Tibial artery (tissue), 4 donors: ENCODE measurements at regions of chr5 and their contacts with region 1.

Region 1: DNA sequence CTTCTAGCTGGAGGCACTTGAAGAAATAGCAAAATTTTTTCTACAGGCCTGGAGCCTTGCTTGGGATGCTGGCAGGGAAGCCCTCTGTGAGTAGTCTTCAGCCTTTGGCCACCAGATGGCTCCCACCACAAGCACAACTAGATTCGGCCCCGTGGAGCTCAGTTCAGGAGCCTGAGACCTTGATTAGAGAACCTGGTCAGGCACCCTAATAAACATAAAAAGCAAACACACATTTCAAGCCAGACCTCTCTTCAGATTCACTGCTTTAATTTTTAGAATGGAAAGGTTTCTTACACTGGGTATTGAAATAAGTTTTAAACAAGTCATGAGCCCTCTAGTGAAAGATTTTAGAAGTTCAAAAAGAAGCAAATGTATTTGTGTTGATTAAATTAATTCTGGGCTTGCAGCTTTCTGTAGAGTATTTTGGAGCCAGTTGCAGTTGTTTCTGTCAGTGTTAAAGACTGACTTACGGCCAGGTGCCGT is 41.4 kb downstream of the GLRX start:
- DNase-seq: peak; percentile 88 to 89
- H3K4me3 ChIP-seq: no peak overlapping the region
- H3K27ac ChIP-seq: peak overlapping the region; percentile 58 to 66
- H3K4me1 ChIP-seq: peaks cover 0 to 23% (median 5%) of the 10 kb centered on the region in 4 donors
- H3K27me3 ChIP-seq: no peaks in the 10 kb centered on the region
- CTCF ChIP-seq: peak; percentile 83 to 94

Region 2: GRCh38 chr5:95664204-95664786 is 116.8 kb before region 1 on chr5:
- intact Hi-C with region 1: loop called (anchors 10 kb)
- DNase-seq: peak in 1 of 2 donors; percentile 38
- H3K4me3 ChIP-seq: no peak overlapping the region
- H3K27ac ChIP-seq: no peak overlapping the region
- H3K4me1 ChIP-seq: peaks cover 0 to 3% (median under 1%) of the 10 kb centered on the region in 4 donors
- H3K27me3 ChIP-seq: no peaks in the 10 kb centered on the region
- CTCF ChIP-seq: peak; percentile 76 to 80

Region 3: DNA sequence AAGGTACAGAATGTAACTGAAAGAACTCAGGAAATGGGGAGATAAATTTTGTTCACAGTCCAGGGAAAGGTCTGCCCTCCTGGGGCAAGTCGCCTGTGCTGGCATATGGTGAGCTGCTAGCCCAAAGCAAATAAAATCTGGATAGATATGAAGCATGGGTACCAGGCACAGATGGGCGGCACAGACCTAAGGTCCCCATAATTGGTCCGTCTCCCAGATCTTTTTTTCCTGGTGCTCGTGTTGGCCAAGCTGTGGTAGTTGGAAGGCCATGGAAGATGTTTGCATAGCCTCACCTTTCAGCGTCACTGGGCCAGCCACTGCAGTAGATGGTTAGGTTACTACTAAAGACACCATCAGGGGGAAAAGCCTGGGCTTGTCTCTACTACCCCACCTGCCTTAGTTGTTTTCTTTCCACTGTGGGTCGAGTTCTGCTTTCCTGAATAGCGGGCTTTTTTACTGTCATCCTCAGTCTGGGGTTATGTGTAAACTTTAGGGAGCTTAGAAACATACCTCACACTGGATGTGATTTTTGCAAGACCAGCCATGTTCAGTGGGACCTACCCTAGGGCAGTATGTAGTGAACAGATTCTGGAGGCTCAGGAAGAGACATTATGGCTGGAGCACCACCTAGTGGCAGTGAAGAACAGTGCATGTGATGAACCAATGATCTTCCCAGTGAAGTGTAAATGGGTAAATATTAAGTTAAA is 65.6 kb after region 1 on chr5:
- intact Hi-C with region 1: loop called (anchors 1 kb)
- DNase-seq: peak; percentile 73 to 80
- H3K4me3 ChIP-seq: no peak overlapping the region
- H3K27ac ChIP-seq: peak overlapping the region in 1 of 2 donors; percentile 15
- H3K4me1 ChIP-seq: peaks cover 0 to 36% (median 12%) of the 10 kb centered on the region in 4 donors
- H3K27me3 ChIP-seq: no peaks in the 10 kb centered on the region
- CTCF ChIP-seq: peak; percentile 91 to 97